ENCODE measurements at regions of chr19 and their contacts with region 1.

Region 1: DNA sequence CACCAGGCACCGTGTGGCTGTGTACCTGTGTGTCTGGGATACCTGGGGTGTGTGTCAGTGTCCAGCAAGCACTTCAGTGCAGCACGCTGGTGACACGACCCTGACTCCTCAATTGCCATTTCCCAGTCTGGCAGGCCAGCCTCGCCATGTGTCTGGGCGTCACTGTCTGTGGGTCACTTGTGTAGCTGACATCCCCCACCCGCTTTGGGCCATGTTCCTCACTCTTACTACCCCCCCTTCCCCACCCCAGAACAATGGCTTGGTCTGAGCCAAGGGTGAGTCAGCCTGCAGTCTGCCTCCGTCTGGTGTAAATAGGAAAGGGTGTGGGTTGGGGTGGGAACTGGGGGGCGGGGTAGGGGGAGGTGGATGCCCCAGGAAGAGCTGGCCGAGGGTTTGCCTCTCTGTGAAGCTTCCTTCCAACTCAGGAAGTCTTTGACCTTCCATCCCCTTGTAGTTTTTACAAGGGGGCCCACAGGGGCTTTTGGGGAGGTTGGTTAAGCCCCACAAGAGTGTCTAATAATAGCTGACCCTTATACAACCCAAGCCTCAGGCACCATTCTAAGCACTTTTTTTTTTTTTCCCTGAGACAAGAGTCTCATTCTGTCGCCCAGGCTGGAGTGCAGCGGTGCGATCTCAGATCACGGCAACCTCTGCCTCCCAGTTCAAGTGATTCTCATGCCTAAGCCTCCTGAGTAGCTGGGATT is 17.6 kb downstream of the NOVA2 start:
- DNase-seq: peak; percentile 38
- ATAC-seq: no peak
- H3K4me3 ChIP-seq: no peak overlapping the region
- H3K27ac ChIP-seq: no peak overlapping the region
- H3K4me1 ChIP-seq: no peaks in the 10 kb centered on the region
- H3K27me3 ChIP-seq: peaks cover 3 to 22% of the 10 kb centered on the region in 2 experiments; a peak in 2 of 5 replicates
- CTCF ChIP-seq: no peak
- EP300 ChIP-seq: no peak
- POLR2A ChIP-seq: no peak
- RAD21 ChIP-seq: no peak

Region 2: GRCh38 chr19:45927565-45928261 is 28.3 kb before region 1 on chr19:
- CTCF ChIA-PET with region 1: no interaction called
- POLR2A ChIA-PET with region 1: no interaction called
- in situ Hi-C with region 1: no loop called
- intact Hi-C with region 1: no loop called
- DNase-seq: peak; percentile 92
- ATAC-seq: peak; percentile 95
- H3K4me3 ChIP-seq: peak overlapping the region; percentile 17 to 58 (median 49); a peak in 4 of 6 replicates
- H3K27ac ChIP-seq: no peak overlapping the region
- H3K4me1 ChIP-seq: peaks cover 23% of the 10 kb centered on the region
- H3K27me3 ChIP-seq: peaks cover 1 to 12% of the 10 kb centered on the region in 2 experiments; a peak in 4 of 5 replicates
- CTCF ChIP-seq: peak; percentile 43
- EP300 ChIP-seq: no peak
- POLR2A ChIP-seq: peak; percentile 22 to 66; a peak in 2 of 4 replicates
- RAD21 ChIP-seq: no peak

Region 3: DNA sequence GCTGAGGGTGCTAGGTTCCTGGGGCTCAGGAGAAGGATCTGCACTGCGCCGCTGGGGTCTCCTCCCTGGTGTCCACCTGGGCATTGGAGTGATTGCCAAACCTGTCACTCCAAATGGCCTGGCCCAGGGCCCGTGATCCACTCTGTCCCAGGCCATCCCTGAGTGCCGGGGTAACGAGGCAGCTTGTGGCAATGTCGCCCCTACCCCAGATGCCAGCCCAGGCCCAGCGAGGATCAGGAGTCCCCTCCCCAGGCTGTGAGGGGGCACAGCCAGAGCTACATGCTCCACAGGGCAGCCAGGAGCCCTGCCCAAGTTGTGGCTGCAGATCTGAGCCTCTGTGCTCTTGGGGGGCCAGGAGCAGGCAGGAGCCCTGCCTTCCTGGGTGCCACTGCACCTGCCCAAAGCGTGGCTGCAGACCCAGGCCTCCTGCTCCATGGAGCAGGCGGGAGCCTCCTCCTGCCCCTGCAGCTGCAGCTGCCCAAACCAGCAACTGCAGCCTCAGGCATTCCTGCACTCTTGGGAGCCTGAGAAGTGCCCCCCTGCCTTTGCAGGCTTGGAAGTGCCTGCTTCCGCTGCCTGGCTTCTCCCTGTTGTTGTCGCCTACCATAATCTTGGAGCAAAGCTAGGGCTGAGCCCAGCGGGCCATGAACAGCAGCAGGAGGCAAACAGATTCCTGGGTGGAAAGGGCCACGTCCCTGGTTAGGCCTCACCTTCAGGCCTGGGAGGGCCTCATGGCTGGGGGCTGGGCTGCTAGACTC is 80.1 kb after region 1 on chr19:
- CTCF ChIA-PET with region 1: no interaction called
- POLR2A ChIA-PET with region 1: no interaction called
- in situ Hi-C with region 1: no loop called
- intact Hi-C with region 1: loop called (anchors 2 kb)
- DNase-seq: no peak
- ATAC-seq: peak; percentile 43
- H3K4me3 ChIP-seq: no peak overlapping the region
- H3K27ac ChIP-seq: no peak overlapping the region
- H3K4me1 ChIP-seq: peaks cover 19% of the 10 kb centered on the region
- H3K27me3 ChIP-seq: no peaks in the 10 kb centered on the region
- CTCF ChIP-seq: no peak
- EP300 ChIP-seq: no peak
- POLR2A ChIP-seq: no peak
- RAD21 ChIP-seq: no peak

Measured in HepG2 (cell line).